ENCODE measurements at regions of chr1 and their contacts with region 1.

Region 1: DNA sequence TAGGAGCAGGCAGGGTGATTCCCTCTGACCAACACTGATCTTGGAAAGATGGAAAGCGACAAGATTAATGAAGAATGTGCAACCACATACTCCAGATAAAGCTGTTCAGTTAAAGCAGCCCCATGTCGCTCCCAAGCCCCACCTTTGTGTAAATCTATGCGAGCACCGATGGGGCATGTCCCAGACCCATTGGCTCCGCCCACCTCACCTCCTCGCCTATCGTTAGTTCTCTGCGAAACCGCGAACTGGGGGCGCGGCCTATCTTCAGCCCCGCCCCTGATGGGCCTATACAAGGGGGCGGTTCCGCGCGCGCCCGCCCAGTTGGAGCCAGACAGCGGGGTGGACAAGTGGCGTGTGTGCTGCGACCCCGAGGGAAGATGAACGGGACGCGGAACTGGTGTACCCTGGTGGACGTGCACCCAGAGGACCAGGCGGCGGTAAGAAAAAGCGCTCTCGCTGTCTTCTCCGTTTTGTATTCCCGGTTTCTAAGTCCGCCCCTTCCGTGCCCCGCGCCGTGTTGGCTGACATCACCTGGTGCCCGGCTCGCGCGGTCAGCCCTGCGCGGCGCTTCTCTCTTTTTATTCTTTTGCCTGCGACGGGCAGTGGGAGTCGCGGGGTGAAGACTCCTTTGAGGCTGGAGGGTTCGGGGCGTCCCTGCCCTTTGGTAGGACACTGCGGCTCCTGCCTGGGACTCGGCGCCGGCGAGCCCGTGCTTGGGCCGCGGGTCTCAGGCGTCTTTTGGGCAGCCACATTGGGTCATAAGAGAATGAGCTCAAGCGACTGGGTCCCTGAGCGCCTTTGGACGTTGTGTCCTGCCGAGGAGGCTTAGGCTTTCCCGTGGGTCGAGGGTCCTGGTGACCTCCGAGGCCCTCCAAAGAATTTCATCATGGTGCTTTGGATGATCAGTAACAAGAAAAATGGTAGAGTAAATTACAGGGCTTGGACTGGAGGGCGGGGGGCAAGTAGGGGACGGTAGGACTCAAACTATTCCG is at the start of gene TUFT1:
- DNase-seq: peak; percentile 96
- ATAC-seq: peak; percentile 96 to 97
- total RNA-seq, gene TUFT1: 3.9 TPM

Region 2: DNA sequence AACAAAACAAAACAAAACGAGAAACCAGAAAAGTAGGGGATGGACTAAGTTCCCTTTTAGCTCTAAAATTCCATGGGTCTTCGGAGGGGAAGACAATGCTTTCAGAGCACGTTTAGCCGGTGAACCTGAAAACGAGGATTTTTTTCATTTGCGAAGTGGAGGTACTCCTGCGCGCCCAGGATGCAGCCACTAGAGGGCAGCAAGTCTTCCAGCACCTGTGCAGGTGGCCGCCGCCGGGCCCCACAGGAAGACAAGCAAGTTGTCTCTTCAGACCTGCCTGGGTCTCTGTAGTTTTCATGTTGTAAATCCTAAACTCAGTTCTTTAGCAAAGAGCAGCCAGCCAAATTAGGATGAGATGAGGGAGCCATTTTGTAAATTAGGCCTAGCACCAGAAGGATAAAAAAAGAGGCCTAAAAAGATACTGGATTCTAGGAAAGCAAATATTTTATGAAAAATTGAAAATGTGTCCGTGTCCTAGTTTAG is 53.9 kb after region 1 on chr1:
- intact Hi-C with region 1: no loop called
- DNase-seq: peak; percentile 78
- ATAC-seq: peak; percentile 57 to 78

Region 3: DNA sequence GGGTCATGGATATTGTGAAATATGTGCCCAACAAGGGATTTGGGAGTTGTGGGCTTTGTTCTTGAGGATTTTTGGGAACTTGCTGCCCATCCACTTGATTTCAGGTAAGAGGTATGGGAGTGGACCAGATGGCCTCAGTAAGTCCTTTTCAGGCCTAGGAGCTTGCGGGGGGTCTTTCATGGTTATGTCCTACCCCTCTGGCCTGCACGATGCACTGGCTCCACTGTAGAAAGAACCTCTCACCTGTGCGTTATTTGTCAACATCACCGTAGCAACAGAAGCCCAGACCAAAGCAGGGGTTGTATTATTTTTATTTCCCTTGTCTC is 189.6 kb after region 1 on chr1:
- intact Hi-C with region 1: loop called (anchors 2 to 5 kb)
- DNase-seq: no peak
- ATAC-seq: no peak

Measured in left cardiac atrium (tissue), 4 donors.